HCT116 (cell line): ENCODE measurements at regions of chr3 and their contacts with region 1.

Region 1: DNA sequence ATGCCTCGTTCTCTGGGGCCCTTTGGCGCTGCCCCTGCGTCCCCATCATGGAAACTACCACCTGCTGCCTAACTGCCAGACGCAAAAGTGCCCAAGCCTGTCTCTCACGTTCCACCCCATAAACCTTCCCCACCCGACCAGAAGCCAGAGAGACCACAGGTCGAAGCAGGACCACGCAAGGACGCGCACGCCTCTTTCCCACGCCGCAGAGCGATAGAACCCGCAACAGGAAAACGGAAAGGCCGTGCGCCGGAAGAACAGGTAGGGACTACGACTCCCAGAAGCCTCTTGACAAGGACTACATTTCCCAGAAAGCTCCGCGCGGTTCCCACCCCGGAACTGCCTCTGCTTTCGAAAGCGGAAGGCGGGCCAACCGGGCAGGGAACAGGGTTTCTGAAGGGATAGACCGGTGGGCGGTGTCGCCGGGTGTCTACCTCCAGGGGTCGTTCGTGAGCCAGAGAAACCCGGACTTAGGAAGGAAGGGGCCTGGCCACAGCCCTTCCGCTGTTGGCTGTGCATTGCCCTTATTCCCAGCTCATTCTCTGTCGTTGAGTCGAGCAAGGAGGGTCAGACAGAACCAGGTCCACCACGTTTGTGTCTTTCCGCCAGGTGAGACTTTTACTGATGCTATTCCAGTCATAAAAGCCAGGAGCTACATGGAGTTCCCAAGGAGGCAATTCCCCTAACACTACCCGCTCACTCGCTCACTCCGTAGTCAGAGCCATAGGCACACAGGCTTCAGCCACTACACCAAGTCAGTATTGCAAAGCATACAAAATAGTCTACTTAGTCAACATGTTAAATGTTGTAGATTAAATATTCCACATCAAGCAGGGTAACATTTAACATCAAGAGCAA is 56.6 kb upstream of the ZBTB38 start:
- DNase-seq: peak; percentile 96
- ATAC-seq: peak; percentile 89
- H3K4me3 ChIP-seq: peak overlapping the region; percentile 78 to 91
- H3K27ac ChIP-seq: peak overlapping the region; percentile 45
- H3K4me1 ChIP-seq: peaks cover 2 to 29% of the 10 kb centered on the region in 2 experiments; a peak in 3 of 4 replicates
- H3K27me3 ChIP-seq: no peaks in the 10 kb centered on the region
- CTCF ChIP-seq: peak; percentile 69 to 91 (median 69)
- POLR2A ChIP-seq: no peak
- RAD21 ChIP-seq: peak; percentile 91

Region 2: DNA sequence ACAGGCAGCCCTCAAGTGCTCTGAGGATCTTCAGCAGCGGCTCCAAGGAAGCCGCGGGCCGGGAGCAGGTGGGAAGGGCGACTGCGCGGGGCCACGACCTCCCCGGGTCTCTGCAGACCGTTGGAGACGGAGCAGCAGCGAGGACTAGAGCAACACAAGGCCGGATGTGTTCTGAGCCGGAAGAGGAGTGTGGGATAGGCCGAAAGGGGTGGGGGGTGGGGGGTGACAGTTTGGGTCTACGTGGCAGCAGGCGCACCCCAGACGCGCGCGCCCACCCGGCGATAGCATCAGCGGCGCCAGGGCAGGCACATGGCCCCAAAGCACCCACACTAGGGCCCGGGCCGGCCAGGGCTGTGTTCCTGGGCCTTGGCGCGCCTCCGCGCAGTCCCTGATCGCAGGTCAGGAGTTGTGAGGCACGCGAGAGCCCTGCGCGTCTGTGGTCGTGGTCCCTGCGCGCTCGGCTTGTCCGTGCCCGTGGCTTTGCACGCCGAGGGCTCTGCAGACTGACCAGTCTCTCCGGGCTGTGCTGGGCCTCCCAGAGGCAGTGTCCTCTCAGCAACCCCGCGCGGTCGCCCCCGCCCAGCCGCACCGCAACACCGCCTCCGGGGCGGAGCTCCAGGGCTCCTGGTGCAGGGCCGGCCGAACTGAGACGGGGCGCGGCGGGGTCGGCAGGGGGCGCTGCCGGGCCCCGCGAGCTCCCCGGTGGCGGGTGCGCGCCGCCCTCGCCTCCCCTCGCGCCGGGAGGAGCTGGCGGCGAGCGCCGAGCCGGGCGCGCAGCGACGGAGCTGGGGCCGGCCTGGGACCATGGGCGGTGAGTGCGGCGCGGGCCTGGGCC is 80.4 kb before region 1 on chr3 and contains the start of gene PXYLP1:
- CTCF ChIA-PET with region 1: interaction called, 15 read pairs
- POLR2A ChIA-PET with region 1: no interaction called
- RAD21 ChIA-PET with region 1: no interaction called
- intact Hi-C with region 1: no loop called
- DNase-seq: peak; percentile 36
- ATAC-seq: peak; percentile 95
- H3K4me3 ChIP-seq: peak within 1 kb of the TSS; percentile 67 to 69
- H3K27ac ChIP-seq: peak within 1 kb of the TSS; percentile 55; the same call in 1 of the 2 replicates
- H3K4me1 ChIP-seq: peaks cover 7 to 14% of the 10 kb centered on the region in 2 experiments; a peak in 3 of 4 replicates
- H3K27me3 ChIP-seq: no peaks in the 10 kb centered on the region
- CTCF ChIP-seq: peak; percentile 34 to 51 (median 36); a peak in 5 of 6 replicates
- POLR2A ChIP-seq: peak; percentile 49
- RAD21 ChIP-seq: 0 out of 2 replicates have a peak, but pooled peaks have one; percentile 18
- total RNA-seq, gene PXYLP1: 15.3 TPM

Region 3: GRCh38 chr3:141360888-141361598 is 49.3 kb after region 1 on chr3:
- CTCF ChIA-PET with region 1: interaction called, 6 read pairs
- POLR2A ChIA-PET with region 1: no interaction called
- RAD21 ChIA-PET with region 1: interaction called, 3 to 4 read pairs
- intact Hi-C with region 1: loop called (anchors 2 kb)
- DNase-seq: peak; percentile 59
- ATAC-seq: peak; percentile 89
- H3K4me3 ChIP-seq: peak overlapping the region; percentile 20 to 41; a peak in 2 of 4 replicates
- H3K27ac ChIP-seq: no peak overlapping the region
- H3K4me1 ChIP-seq: peaks cover 7 to 20% of the 10 kb centered on the region in 2 experiments
- H3K27me3 ChIP-seq: no peaks in the 10 kb centered on the region
- CTCF ChIP-seq: peak; percentile 80 to 95 (median 81)
- POLR2A ChIP-seq: no peak
- RAD21 ChIP-seq: peak; percentile 94

Region 4: DNA sequence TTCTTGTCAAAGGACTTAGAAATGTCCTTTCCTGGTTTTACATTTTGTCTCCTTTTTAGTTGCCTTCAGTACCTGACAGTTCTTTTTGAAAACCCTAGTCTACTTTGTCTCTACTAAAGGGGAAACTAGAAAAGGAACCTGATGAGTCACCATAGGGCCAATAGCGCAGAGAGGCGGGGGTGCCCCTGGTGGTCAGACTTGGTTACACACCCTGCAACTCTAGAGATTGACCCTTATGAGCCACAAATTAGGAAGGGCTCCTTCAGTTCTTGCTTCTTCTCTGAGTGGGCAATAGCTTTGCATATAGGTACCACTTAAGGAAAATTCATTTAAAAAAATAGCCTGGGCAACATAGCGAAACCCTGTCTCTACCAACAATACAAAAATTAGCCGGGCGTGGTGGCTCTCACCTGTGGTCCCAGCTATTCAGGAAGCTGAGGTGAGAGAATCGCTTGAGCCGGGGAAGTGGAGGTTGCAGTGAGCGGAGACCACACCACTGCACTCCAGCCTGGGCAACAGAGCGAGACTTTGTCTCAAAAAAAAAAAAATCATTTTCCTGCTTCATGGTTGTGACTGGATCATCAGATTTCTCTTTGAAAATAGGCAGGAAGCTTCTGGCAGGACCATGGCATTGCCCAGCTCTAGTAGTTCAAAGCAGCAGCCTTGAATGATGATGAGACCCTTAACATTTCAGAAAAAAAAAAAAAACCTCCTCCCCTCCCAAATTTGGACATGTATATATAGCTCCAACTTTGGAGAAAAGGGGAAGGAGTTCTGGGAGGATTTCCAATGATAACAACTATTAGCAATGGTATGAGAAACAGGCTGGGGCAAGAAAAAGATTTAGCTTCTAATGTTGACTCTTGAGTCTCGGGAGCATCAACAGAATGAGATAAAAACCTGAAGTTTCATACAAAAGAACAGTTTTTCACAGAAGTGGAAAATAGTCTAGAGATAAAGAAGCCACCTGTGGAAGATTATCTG is 129.9 kb after region 1 on chr3:
- CTCF ChIA-PET with region 1: interaction called, 10 read pairs
- POLR2A ChIA-PET with region 1: no interaction called
- RAD21 ChIA-PET with region 1: no interaction called
- intact Hi-C with region 1: no loop called
- DNase-seq: no peak
- ATAC-seq: peak; percentile 98
- H3K4me3 ChIP-seq: no peak overlapping the region
- H3K27ac ChIP-seq: no peak overlapping the region
- H3K4me1 ChIP-seq: peaks cover 0 to 4% of the 10 kb centered on the region in 2 experiments; a peak in 1 of 4 replicates
- H3K27me3 ChIP-seq: no peaks in the 10 kb centered on the region
- CTCF ChIP-seq: peak; percentile 74 to 96 (median 94)
- POLR2A ChIP-seq: no peak
- RAD21 ChIP-seq: peak; percentile 74

Region 5: DNA sequence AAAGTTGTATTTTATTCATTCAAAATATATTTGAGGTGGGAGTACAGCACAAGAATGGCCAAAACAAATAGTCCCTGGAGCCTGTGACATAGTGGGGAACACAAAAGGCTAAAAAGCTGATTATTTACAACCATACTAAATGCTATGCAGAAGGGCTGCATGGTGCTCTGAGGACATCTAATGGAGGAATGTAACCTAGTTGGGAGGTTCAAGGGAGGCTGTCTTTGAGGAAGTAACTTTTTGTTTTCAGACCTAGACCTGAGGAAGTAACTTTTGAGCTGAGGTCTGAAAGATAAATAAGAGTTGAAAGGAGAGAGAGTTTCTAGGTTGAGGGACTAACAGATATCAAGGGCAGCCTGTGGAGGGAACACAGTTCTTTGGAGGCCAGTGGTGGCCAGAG is 140.3 kb after region 1 on chr3:
- CTCF ChIA-PET with region 1: interaction called, 104 read pairs
- POLR2A ChIA-PET with region 1: interaction called, 5 read pairs
- RAD21 ChIA-PET with region 1: interaction called, 6 to 7 read pairs
- intact Hi-C with region 1: loop called (anchors 1 kb)
- DNase-seq: no peak
- ATAC-seq: peak; percentile 67
- H3K4me3 ChIP-seq: no peak overlapping the region
- H3K27ac ChIP-seq: no peak overlapping the region
- H3K4me1 ChIP-seq: peaks cover 0 to 8% of the 10 kb centered on the region in 2 experiments; a peak in 1 of 4 replicates
- H3K27me3 ChIP-seq: no peaks in the 10 kb centered on the region
- CTCF ChIP-seq: peak; percentile 37 to 93 (median 54); a peak in 5 of 6 replicates
- POLR2A ChIP-seq: no peak
- RAD21 ChIP-seq: peak; percentile 94

Region 6: DNA sequence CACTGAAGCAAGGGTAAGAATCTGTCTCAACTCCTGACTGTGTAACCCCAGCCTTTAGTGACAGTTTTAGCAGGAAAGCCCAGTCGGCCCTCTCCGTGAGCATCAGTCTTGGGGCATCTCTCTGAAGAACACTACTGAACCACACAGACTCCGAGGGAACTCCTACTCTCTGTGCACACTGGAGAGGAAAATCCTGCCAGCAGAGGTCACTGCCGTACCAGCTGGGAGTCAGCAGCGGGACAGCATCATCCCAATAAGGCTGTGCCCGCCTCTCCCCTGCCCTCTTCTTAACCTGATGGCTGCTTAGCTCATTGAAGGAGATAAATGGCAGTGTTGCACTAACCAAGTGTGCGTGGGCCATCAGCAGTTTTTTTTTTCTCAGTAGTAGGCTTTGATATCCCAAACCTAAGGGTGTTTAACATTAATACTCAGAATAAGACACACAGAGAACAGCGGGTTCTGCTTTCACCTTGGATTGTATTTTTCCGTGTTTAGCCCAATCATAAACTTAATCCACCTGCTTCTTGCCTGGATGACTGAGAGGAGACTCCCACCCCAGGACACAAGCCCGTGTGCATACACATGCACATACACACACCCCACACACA is 148.5 kb after region 1 on chr3:
- CTCF ChIA-PET with region 1: interaction called, 104 read pairs
- POLR2A ChIA-PET with region 1: interaction called, 3 read pairs
- RAD21 ChIA-PET with region 1: interaction called, 3 to 6 read pairs
- intact Hi-C with region 1: no loop called
- DNase-seq: peak; percentile 75
- ATAC-seq: peak; percentile 100
- H3K4me3 ChIP-seq: no peak overlapping the region
- H3K27ac ChIP-seq: no peak overlapping the region
- H3K4me1 ChIP-seq: peaks cover 0 to 5% of the 10 kb centered on the region in 2 experiments; a peak in 2 of 4 replicates
- H3K27me3 ChIP-seq: no peaks in the 10 kb centered on the region
- CTCF ChIP-seq: peak; percentile 88 to 90 (median 90)
- POLR2A ChIP-seq: no peak
- RAD21 ChIP-seq: peak; percentile 96

Region 7: DNA sequence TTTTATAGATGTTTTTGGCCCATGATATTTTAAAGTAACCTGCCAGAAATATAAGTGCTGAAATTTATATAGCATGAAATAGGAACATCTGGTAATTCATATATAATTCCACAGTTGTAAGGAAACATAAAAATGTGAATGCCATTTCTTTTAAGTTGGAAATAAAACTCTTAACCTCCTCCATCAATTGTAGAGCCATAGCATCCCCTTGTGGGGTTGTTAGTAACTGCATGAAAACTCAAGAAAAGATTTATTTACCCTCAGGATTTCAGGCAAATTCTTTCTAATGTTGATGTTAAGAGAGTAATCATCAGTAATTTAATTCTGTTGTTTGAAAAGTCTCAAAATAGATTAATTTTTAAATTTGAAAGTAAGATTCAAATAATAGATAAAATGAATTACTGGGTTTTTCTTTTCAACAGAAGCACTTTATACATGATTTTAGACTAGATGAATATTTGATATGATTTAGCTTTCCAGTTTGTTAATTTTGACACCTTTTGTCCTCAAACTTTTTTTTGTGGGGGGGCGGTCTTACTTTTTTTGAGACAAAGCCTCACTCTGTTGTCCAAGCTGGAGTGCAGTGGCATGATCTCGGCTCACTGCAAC is 249.8 kb after region 1 on chr3:
- CTCF ChIA-PET with region 1: interaction called, 10 read pairs
- POLR2A ChIA-PET with region 1: interaction called, 4 read pairs
- RAD21 ChIA-PET with region 1: no interaction called
- intact Hi-C with region 1: no loop called
- DNase-seq: peak; percentile 58
- ATAC-seq: no peak
- H3K4me3 ChIP-seq: no peak overlapping the region
- H3K27ac ChIP-seq: no peak overlapping the region
- H3K4me1 ChIP-seq: no peaks in the 10 kb centered on the region
- H3K27me3 ChIP-seq: no peaks in the 10 kb centered on the region
- CTCF ChIP-seq: peak; percentile 89 to 96 (median 94)
- POLR2A ChIP-seq: no peak
- RAD21 ChIP-seq: peak; percentile 96

Region 8: GRCh38 chr3:142976621-142977398 is 1665.1 kb after region 1 on chr3:
- CTCF ChIA-PET with region 1: no interaction called
- POLR2A ChIA-PET with region 1: no interaction called
- RAD21 ChIA-PET with region 1: no interaction called
- intact Hi-C with region 1: no loop called
- DNase-seq: peak; percentile 61
- ATAC-seq: peak; percentile 88
- H3K4me3 ChIP-seq: no peak overlapping the region
- H3K27ac ChIP-seq: no peak overlapping the region
- H3K4me1 ChIP-seq: peaks cover 3 to 20% of the 10 kb centered on the region in 2 experiments; a peak in 3 of 4 replicates
- H3K27me3 ChIP-seq: no peaks in the 10 kb centered on the region
- CTCF ChIP-seq: no peak
- POLR2A ChIP-seq: no peak
- RAD21 ChIP-seq: no peak